ENCODE measurements at regions of chr14 and their contacts with region 1.

Region 1: GRCh38 chr14:95106971-95107370 is 50.4 kb downstream of the DICER1 start:
- DNase-seq: no peak

Region 2: DNA sequence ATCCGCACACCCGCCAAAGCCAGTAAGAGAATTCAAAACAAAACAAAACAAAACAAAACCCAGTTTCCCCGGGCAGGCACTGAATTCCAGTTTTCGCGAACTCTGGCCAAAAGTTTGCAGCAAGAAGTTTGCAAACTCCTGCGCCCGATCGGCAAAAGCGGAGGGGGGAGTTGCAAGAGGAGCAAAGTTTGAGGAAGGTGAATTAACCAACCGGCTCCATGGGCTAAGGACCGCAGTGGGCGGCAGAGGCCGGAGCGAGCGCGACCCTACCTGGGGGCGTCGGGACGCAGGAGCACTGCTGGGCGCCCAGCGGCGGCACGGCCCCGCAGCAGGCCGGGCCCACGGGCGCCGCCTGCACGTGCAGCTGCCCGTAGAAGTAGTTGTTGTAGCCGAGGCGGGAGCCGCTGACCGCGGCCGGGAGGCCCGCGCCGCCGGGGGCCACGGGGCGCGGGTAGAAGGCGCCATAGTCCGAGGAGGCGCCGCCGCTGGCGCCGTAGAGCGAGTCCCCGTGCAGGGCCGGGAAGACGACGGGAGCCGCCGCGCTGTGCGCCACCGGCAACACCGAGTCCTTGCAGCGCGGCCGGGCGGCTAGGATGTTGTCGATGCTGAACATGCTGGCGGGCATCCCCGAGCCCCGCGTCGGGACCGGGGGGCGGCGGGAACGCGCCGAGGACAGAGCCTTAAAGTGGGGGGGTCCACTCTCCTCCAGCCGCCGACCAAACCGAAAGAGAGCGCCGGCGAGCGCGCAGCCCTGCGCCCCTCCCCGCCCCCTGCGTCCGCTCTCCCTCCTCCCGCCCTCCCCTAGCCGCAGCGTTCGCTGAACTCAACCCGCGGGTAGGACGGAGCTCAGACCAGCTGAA is 337.4 kb before region 1 on chr14 and contains the start of gene GSC:
- intact Hi-C with region 1: loop called (anchors 10 kb)
- DNase-seq: no peak
- total RNA-seq, gene GSC: 0.43 TPM